ENCODE measurements at regions of chr1 and their contacts with region 1.

Region 1: DNA sequence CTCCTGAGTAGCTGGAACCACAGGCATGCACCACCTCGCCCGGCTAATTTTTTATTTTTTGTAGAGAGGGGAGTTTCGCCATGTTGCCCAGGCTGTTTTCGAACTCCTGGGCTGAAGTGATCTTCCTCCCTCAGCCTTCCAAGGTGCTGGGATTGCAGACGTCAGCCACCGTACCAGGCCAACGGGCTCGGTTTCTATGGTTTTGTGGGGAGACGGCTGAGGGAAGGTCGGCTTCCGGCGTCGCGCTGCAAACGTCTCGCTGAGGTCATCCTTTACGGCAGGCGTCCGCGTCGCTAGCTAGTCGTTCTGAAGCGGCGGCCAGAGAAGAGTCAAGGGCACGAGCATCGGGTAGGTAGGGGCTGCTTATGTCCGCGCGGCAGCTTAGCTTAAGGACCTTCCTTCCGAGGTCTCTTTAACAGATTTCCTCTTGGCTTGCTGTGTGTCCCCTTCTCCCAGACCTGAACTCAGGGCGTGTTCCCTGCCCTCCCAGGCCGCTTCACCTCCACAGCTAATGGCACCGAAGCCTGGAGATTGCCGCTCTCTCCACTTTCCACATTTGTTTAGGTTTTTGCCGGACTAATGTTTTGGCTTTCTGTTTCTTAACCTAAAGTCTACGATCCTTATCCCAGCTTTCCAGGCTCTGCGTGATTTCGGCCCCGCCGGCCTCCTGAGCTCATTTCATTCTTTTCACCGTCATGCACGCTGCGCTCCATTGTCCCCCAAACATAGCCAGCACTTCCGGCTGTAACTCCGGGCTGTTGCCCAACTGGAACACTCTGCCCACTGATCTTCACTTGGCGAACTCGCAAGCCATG is at the start of gene NDUFS5:
- DNase-seq: peak; percentile 92
- H3K4me3 Mint-ChIP-seq: peak within 1 kb of the TSS; percentile 98
- H3K27ac Mint-ChIP-seq: peak within 1 kb of the TSS; percentile 98
- H3K4me1 Mint-ChIP-seq: peaks cover 32% of the 10 kb centered on the region
- H3K27me3 Mint-ChIP-seq: no peaks in the 10 kb centered on the region
- total RNA-seq, gene NDUFS5: 226 TPM

Region 2: GRCh38 chr1:38859561-38860453 is 166.5 kb before region 1 on chr1 and contains the start of gene RRAGC:
- CTCF ChIA-PET with region 1: no interaction called
- intact Hi-C with region 1: loop called (anchors 1 kb)
- DNase-seq: peak; percentile 99
- H3K4me3 Mint-ChIP-seq: peak within 1 kb of the TSS; percentile 86
- H3K27ac Mint-ChIP-seq: peak within 1 kb of the TSS; percentile 91
- H3K4me1 Mint-ChIP-seq: peaks cover 51% of the 10 kb centered on the region
- H3K27me3 Mint-ChIP-seq: no peaks in the 10 kb centered on the region
- total RNA-seq, gene RRAGC: 22.3 to 23.3 TPM

Region 3: DNA sequence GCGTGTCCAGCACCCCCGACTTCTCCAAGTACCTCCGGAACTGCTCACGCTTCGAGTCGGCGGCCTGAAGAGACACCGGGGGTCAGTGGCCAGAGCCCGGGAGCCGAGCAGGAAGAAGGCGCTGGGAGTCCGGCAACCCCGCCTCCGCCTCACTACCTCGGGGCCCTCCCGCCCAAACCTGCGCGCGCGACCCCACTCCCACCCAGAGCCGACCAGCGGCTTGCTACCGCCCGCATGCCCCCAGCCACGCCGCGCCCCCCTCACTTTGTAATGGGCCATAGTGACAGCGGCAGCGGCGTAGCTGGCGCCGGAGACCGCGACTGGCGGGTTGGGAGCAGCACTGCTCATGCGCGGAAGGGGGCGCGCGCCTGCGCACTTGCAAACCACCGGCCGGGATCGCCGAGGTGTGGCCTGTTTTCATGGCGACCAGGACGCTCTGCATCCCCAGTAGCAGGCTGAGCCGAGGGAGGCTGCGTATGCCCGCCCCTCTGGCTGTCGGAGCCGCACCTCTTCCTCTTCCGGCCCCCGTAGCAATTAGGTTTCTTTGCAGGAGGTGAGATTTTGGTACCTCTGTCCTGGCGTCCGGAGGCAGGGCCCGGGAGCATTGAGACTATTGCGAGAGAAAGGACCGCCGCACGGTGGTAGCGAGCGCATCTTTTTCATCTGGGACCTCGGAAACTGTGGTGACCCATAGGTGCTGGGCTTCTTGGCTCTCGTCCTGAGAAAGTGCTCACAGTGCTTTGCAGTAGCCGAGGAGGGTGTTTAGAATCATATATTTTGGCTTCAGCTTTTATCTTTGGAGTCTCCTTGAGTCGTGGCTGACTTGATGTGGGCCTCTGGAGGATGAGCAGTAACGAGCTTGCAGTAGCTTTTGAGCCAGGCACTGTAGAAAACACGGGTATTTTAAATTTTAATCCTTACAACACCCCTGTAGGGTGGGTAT is 153.0 kb before region 1 on chr1 and contains the start of gene MYCBP:
- CTCF ChIA-PET with region 1: no interaction called
- intact Hi-C with region 1: loop called (anchors 2 kb)
- DNase-seq: peak; percentile 97
- H3K4me3 Mint-ChIP-seq: peak within 1 kb of the TSS; percentile 86
- H3K27ac Mint-ChIP-seq: peak within 1 kb of the TSS; percentile 57
- H3K4me1 Mint-ChIP-seq: peaks cover 19% of the 10 kb centered on the region
- H3K27me3 Mint-ChIP-seq: no peaks in the 10 kb centered on the region
- total RNA-seq, gene MYCBP: 54.6 to 58.0 TPM

Region 4: GRCh38 chr1:38990738-38991639 is 35.3 kb before region 1 on chr1 and contains the start of gene AKIRIN1:
- CTCF ChIA-PET with region 1: interaction called, 3 read pairs
- intact Hi-C with region 1: loop called (anchors 1 kb)
- DNase-seq: peak; percentile 97
- H3K4me3 Mint-ChIP-seq: peak within 1 kb of the TSS; percentile 80
- H3K27ac Mint-ChIP-seq: peak within 1 kb of the TSS; percentile 84
- H3K4me1 Mint-ChIP-seq: peaks cover 52% of the 10 kb centered on the region
- H3K27me3 Mint-ChIP-seq: no peaks in the 10 kb centered on the region
- total RNA-seq, gene AKIRIN1: 58.1 to 58.5 TPM

Region 5: DNA sequence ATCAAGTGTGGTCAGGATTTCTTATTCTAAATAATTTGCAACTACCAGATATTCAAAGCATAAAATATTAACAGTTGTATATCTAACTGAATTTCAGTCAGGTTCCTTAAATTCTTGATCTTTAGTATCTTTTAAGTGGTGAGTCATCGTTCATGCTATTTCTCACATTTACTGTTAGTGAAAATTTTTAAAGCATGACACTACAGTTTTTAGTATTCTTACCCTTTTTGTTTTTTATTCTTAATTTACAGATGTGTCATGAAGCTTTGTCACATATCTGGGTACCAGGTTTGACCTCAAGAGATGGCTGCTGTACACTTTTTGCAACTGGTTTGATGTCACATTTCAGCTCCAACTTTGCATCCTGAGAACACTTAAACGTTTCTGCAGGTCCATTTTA is 22.5 kb before region 1 on chr1:
- CTCF ChIA-PET with region 1: no interaction called
- intact Hi-C with region 1: loop called (anchors 1 kb)
- DNase-seq: no peak
- H3K4me3 Mint-ChIP-seq: no peak overlapping the region
- H3K27ac Mint-ChIP-seq: peak overlapping the region; percentile 83
- H3K4me1 Mint-ChIP-seq: peaks cover 41% of the 10 kb centered on the region
- H3K27me3 Mint-ChIP-seq: no peaks in the 10 kb centered on the region

Region 6: GRCh38 chr1:39091845-39092645 is 65.8 kb after region 1 on chr1:
- CTCF ChIA-PET with region 1: interaction called, 10 read pairs
- intact Hi-C with region 1: loop called (anchors 10 kb)
- DNase-seq: peak; percentile 83
- H3K4me3 Mint-ChIP-seq: no peak overlapping the region
- H3K27ac Mint-ChIP-seq: no peak overlapping the region
- H3K4me1 Mint-ChIP-seq: peaks cover 4% of the 10 kb centered on the region
- H3K27me3 Mint-ChIP-seq: no peaks in the 10 kb centered on the region

Measured in activated naive CD4-positive, alpha-beta T cell treated with anti-CD3 and anti-CD28 coated beads for 36 hours (primary cell).